Posterior vena cava (tissue), 2 donors: ENCODE measurements at regions of chr10 and their contacts with region 1.

Region 1: GRCh38 chr10:72248468-72249151 is 25.1 kb upstream of the DDIT4 start:
- DNase-seq: peak; percentile 95

Region 2: DNA sequence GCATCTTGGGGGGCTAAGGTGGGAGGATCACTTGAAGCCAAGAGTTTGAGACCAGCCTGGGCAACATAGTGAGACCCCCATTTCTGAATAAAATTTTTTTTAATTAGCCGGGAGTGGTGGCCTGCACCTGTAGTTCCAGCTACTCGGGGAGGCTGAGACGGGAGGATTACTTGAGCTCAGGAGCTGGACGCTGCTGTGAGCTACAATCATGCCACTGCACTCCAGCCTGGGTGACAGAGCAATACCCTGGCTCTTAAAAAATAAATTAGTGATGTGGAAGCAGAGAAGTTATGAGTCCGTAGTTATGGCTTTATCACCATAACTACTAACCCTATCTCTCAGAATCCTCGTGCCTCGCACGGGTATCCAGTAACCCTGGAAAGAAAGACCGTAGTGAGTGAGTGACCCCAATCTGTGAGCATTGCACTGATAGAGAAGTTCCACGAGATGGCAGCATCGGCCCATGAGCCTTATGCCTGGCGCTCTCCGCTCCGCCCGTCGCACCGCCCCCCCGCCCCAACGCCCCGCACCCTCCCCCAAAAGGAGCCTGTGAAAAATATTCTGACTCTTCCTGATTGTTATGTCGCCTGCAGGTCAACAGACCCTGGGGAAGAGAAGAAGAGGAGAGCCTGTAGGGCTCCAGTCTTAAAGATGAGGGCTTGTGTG is 934.4 kb before region 1 on chr10:
- intact Hi-C with region 1: no loop called
- DNase-seq: peak; percentile 88

Region 3: DNA sequence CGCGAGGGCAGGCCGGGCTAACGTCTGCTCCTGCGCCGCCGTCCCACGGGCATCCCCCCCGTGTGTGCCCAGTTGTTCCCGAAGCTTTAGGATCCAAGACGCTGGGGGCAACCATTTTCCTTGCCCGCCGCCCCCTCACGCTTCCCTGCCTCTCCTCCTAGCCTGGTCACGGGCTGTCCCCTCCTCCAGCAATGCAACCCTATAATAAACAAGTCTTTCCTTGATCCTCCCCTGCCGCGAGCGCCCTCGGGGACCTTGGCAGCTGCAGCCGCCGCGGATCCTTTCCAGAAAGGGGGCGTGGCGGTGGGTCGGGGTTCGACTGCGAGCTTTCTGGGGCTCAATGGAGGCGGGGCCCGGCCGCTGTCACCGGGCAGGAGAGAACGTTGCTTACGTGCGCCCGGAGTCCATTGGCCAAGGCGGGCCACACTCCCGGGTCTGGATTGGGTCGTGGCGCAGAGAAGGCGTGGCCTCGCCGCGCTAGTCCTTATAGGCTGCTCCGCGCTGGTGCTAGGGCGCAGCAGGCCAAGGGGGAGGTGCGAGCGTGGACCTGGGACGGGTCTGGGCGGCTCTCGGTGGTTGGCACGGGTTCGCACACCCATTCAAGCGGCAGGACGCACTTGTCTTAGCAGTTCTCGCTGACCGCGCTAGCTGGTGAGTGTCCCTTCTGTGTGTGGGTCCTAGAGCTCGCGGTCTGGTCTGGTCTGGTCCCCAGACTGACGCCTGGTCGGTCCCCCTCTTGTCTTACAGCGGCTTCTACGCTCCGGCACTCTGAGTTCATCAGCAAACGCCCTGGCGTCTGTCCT is 25.0 kb after region 1 on chr10 and contains the start of gene DDIT4:
- intact Hi-C with region 1: loop called in 1 of 2 experiments (anchors 2 kb)
- DNase-seq: peak; percentile 100
- total RNA-seq, gene DDIT4: 208 to 244 TPM